HEK293 (cell line): ENCODE measurements at regions of chr19 and their contacts with region 1.

Region 1: DNA sequence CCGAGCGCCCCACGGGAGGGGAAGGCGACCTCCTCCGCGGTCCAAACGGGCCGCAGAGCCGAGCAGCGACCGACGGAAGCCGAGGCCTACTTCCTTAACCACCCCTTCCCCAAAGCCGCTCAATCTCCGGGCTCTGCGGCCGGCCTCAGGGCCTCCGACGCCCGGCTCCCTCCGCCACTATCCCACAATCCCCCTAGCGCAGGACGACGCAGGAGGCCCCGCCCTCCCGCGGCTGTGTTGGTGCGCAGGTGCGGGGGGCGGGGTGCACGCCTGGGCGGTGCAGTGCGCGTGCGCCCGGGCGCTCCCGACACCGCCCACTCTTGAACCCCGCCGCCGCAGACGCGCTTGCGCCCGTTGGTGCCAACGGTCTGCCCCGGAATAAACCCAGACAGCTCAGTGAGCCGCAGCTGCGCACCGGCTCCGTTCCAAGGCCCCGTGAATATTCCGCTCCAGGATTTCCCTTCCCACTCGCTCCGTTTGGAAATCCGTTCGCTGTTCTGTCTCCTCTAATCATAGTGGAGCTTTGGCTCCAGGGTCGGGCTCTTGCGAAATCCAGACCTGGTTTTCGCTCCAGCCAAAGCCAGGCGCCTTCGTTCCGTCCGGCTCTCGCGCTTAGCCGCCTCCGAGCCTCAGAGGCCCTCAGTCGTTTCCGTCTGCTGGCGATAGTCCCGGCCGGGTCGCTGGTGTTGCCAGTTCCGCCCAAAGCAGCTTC is at the start of gene PPP6R1:
- H3K4me3 ChIP-seq: peak within 1 kb of the TSS; percentile 96
- H3K27ac ChIP-seq: peak within 1 kb of the TSS; percentile 94
- H3K4me1 ChIP-seq: peaks cover 28% of the 10 kb centered on the region
- CTCF ChIP-seq: no peak

Region 2: GRCh38 chr19:55166530-55167268 is 92.3 kb before region 1 on chr19 and contains the start of gene DNAAF3:
- CTCF ChIA-PET with region 1: interaction called, 8 read pairs
- POLR2A ChIA-PET with region 1: interaction called, 13 read pairs
- H3K4me3 ChIP-seq: peak within 1 kb of the TSS; percentile 67
- H3K27ac ChIP-seq: peak within 1 kb of the TSS; percentile 54
- H3K4me1 ChIP-seq: peaks cover 2% of the 10 kb centered on the region; the same call in 1 of the 2 replicates
- CTCF ChIP-seq: peak; percentile 17; the same call in 1 of the 2 replicates

Region 3: DNA sequence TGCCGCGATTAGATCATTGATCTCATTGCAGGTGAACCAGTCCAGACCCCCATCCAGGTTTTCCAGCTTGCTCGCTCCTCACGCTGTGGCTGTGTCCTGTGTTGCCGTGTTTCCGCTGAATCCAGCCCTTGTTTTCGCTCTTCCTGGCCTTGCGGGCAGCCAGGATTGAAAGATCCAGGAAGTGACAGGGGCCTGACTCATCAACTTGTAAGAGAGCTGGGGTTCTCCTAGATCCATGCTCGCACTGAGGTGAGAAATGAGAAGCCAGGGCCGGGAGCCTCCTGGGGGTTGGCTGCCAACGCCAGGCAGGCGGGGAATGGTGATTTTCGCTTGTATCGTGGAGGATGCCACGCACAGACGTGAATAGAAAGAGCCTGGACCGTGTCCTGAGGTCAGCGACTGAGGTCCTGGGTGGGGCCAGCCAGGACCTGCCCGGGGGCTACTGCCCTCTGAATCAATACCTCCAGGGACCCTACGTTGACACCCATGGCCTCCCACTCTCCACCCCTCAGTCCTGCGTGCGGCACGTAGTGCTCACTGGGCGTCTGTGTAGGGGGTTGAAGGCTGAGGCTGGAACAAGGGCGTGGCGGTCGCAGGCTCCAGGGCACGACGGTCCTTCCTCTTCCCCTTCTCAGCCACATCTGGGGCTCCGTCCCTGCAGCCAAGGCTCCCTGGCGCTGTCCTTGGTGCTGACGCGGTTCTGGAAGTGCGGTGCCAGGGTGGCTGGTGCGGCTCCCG is 42.4 kb before region 1 on chr19:
- CTCF ChIA-PET with region 1: interaction called, 4 read pairs
- POLR2A ChIA-PET with region 1: interaction called, 39 read pairs
- H3K4me3 ChIP-seq: peak overlapping the region; percentile 72
- H3K27ac ChIP-seq: peak overlapping the region; percentile 67
- H3K4me1 ChIP-seq: peaks cover 10% of the 10 kb centered on the region
- CTCF ChIP-seq: no peak

Region 4: GRCh38 chr19:55270172-55270942 is 11.4 kb after region 1 on chr19:
- CTCF ChIA-PET with region 1: no interaction called
- POLR2A ChIA-PET with region 1: interaction called, 16 read pairs
- H3K4me3 ChIP-seq: no peak overlapping the region
- H3K27ac ChIP-seq: no peak overlapping the region
- H3K4me1 ChIP-seq: no peaks in the 10 kb centered on the region
- CTCF ChIP-seq: no peak

Region 5: DNA sequence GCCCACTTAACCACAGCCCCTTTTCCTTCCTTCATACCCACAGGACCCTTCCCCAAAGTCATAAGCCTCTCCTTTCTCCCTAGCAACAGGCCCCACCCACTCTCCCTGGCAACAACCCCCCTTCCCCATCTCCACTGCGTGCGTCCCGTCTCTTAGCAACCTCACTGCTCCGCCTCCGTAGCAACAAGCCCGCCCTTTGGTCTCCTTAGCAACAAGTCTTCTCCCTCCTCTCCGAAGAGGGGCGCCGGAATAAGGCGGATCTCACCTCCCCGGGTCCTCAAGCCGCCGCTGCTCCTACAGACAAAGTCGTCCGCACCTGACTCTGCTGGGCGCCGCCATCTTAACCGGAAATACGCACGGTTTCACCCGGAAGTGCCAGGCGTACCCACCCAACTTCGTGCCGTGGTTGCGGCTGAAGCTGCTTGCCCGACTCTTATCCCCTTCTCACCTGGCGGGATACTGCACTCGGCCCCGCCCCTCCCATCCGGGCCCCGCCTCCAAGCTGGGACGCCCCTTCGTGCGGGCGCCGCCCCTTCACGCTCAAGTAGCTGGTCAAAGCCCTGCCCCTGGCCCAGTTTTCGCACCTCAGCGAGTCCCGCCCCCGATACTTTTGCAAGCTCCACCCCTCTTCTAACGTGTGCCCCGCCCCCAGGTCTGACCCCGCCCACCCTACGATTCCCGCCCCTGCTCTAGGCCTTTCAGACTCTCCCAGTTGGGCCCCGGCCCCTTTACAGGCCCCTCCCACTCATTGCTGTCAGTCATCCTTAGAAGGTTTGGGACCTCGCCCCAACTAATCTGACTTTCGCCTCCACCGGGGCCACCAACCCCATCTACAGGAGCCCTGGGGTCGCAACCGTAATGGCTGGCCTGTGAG is 21.0 kb after region 1 on chr19 and contains the start of gene HSPBP1:
- CTCF ChIA-PET with region 1: interaction called, 3 read pairs
- POLR2A ChIA-PET with region 1: interaction called, 79 read pairs
- H3K4me3 ChIP-seq: peak within 1 kb of the TSS; percentile 97
- H3K27ac ChIP-seq: peak within 1 kb of the TSS; percentile 57
- H3K4me1 ChIP-seq: peaks cover 12% of the 10 kb centered on the region
- CTCF ChIP-seq: no peak

Region 6: DNA sequence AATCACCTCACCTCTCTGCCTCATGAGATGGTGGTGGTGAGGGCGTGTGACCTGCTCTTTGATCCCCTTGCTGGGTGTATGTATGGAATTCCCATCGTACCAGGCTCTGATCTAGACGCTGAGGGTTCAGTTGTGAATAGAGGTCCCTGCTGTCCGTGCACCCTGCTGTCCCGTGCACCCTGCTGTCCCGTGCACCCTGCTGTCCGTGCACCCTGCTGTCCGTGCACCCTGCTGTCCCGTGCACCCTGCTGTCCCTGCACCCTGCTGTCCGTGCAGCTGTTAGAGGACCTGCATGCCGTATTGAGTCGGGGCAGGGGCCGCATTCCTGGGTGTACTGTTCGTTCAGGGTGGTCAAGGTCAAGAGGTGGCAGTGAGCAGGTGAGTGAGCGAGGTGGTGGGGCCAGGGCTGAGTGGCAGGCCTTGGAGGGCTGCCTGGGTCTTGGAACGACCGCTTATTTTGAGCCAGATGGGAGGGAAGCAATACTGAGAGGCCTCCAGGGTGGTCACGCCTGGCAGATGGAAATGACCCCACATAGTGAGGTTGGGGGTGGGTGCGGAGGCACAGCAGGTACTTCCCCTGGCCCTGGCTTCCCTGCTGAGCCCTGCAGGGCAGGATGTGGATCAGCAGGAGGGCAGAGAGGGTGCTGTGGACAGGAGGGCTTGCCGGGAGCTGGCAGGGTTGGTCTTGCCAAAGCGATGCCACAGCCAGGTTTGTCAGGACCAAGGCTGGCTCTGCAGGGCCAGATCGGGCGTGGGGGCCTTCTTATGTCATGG is 411.5 kb after region 1 on chr19:
- CTCF ChIA-PET with region 1: no interaction called
- POLR2A ChIA-PET with region 1: no interaction called
- H3K4me3 ChIP-seq: no peak overlapping the region
- H3K27ac ChIP-seq: peak overlapping the region; percentile 39; the same call in 1 of the 2 replicates
- H3K4me1 ChIP-seq: peaks cover 12% of the 10 kb centered on the region
- CTCF ChIP-seq: no peak